Thyroid gland (tissue), 4 donors: ENCODE measurements at regions of chr3 and their contacts with region 1.

Region 1: GRCh38 chr3:64484289-64484992 is 203.4 kb downstream of the ADAMTS9 start:
- DNase-seq: peak; percentile 81 to 86
- H3K4me3 ChIP-seq: no peak overlapping the region
- H3K27ac ChIP-seq: no peak overlapping the region
- H3K4me1 ChIP-seq: peaks cover 0 to 7% of the 10 kb centered on the region in 2 donors
- H3K27me3 ChIP-seq: no peaks in the 10 kb centered on the region
- CTCF ChIP-seq: peak; percentile 61 to 93 (median 86)
- POLR2A ChIP-seq: no peak

Region 2: DNA sequence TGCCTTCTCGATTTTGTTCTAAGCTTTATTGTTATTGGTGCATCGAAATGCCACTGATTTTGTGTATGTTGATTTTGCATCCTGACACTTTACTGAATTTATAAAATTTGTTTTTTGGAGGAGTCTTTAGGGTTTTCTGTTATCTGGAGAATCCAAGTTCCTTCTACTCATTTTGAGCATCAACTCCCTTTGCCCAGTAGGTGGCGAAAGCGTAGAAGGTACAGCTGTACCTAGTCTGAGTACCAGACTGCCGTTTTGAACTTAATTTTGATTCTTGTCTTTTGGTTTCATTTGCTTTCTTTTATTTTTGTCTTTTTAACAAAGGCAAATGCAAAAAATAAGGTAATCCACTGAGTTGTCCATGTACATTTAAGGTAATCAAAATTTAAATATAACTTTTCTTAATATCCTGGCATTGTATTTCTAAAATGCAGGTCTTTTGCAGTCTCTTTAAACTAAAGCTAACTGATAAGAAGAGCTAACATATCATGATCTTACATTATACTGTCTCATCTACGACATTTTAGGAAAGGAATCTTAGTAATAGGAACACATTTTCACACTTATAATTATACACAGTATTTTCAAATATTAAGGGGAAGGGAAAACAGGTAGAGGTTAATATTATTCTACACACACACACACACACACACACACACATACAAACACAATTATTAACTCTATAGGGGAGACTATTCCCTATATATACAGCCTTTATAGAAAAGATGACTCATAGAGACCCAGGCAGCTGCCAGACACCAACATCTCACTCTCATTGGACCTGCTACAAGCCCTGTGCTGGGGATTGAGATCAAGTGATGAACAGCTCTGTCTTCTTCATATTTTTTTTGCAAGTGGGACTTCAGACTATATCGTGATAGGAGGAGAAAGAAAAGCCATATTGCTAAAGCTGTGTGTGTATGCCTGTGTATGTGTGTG is 1134.6 kb before region 1 on chr3:
- intact Hi-C with region 1: loop called (anchors 10 kb)
- DNase-seq: peak; percentile 58 to 71
- H3K4me3 ChIP-seq: no peak overlapping the region
- H3K27ac ChIP-seq: no peak overlapping the region
- H3K4me1 ChIP-seq: no peaks in the 10 kb centered on the region
- H3K27me3 ChIP-seq: no peaks in the 10 kb centered on the region
- CTCF ChIP-seq: peak in 5 of 6 experiments; percentile 52 to 73 (median 65)
- POLR2A ChIP-seq: no peak

Region 3: DNA sequence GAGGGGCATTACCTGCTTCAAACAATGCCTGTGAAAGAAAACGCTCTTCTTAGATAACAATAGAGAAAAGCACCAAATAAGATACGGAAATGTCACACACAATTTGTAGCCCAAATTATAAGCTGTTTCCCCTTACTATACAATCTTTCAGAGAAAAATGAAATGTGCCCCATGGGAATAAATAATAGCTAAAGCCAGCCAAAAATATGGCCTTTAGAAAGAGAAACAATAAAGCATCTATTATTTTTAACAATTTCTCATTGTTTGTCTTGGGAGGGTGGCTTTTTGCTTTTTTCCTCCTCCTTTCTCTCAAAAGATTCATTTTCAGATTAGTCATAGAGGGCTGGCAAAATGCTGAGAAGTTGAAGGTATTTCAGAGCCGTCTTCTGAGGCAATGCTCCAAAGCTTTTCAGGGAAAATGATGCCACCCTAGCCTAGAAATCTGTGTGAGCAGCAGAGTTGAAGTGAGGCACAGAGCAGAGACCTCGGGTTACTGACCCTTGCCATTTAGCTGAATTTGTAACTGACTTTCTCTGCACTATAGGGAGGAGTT is 172.9 kb before region 1 on chr3:
- intact Hi-C with region 1: loop called (anchors 5 kb)
- DNase-seq: no peak
- H3K4me3 ChIP-seq: no peak overlapping the region
- H3K27ac ChIP-seq: no peak overlapping the region
- H3K4me1 ChIP-seq: peaks cover 0 to 2% of the 10 kb centered on the region in 2 donors
- H3K27me3 ChIP-seq: no peaks in the 10 kb centered on the region
- CTCF ChIP-seq: no peak
- POLR2A ChIP-seq: no peak